ENCODE measurements at regions of chr7 and their contacts with region 1.

Region 1: GRCh38 chr7:91249506-91250240 is 14.6 kb upstream of the FZD1 start:
- DNase-seq: no peak
- ATAC-seq: no peak
- H3K4me3 ChIP-seq: no peak overlapping the region
- H3K27ac ChIP-seq: no peak overlapping the region
- H3K4me1 ChIP-seq: no peaks in the 10 kb centered on the region
- H3K27me3 ChIP-seq: no peaks in the 10 kb centered on the region
- CTCF ChIP-seq: no peak
- POLR2A ChIP-seq: no peak

Region 2: GRCh38 chr7:91098566-91098965 is 151.1 kb before region 1 on chr7:
- intact Hi-C with region 1: loop called in 1 of 10 experiments (anchors 10 kb)
- DNase-seq: no peak
- ATAC-seq: no peak
- H3K4me3 ChIP-seq: no peak overlapping the region
- H3K27ac ChIP-seq: no peak overlapping the region
- H3K4me1 ChIP-seq: no peaks in the 10 kb centered on the region
- H3K27me3 ChIP-seq: no peaks in the 10 kb centered on the region
- CTCF ChIP-seq: no peak
- POLR2A ChIP-seq: no peak